ENCODE measurements at regions of chr21 and their contacts with region 1.

Region 1: GRCh38 chr21:42258153-42258884 is 39.4 kb downstream of the ABCG1 start:
- DNase-seq: peak; percentile 87
- ATAC-seq: peak; percentile 92
- H3K4me3 Mint-ChIP-seq: no peak overlapping the region
- H3K27ac Mint-ChIP-seq: no peak overlapping the region
- H3K4me1 Mint-ChIP-seq: peaks cover 18% of the 10 kb centered on the region
- H3K27me3 Mint-ChIP-seq: no peaks in the 10 kb centered on the region

Region 2: DNA sequence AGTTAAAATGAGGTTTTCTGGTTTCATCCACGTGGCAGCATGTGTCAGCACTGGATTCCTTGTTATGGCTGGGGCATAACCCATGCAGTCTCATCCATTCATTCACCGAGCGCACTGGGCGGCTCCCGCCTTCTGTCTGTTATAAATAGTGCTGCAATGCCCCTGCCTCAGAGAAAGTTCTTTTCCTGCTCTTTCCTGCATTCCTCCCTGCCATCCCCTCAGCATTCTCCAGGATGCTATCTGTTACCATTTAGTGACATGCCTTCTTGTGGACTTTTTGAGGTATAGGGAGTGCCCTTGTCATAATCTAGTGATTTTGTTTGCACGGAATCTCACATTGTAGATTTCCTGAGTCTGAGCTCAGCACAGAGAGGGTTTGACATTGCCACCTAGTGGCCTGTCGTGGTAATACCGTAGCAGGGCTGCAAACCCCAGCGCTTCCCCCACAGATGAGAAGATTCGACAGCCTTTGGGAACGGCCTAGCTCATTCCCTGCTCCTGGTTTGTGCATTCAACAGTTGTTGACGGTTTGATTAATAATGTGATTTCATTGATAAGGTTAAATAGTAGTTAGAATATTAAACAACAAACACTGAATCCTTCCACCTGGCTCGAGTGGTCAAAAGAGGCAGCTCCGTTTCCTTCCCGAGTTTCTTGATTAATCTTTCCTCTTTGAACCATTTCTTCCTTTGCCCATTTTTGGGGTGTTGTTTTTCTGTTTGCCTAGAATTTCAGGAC is 140.9 kb before region 1 on chr21:
- CTCF ChIA-PET with region 1: interaction called, 10 read pairs
- POLR2A ChIA-PET with region 1: no interaction called
- DNase-seq: peak; percentile 84
- ATAC-seq: peak; percentile 81
- H3K4me3 Mint-ChIP-seq: peak overlapping the region; percentile 38
- H3K27ac Mint-ChIP-seq: no peak overlapping the region
- H3K4me1 Mint-ChIP-seq: peaks cover 41% of the 10 kb centered on the region
- H3K27me3 Mint-ChIP-seq: peaks cover 49% of the 10 kb centered on the region

Region 3: GRCh38 chr21:42187976-42188653 is 70.2 kb before region 1 on chr21:
- CTCF ChIA-PET with region 1: interaction called, 29 read pairs
- POLR2A ChIA-PET with region 1: interaction called, 3 read pairs
- DNase-seq: peak; percentile 93
- ATAC-seq: peak; percentile 95
- H3K4me3 Mint-ChIP-seq: peak overlapping the region; percentile 53
- H3K27ac Mint-ChIP-seq: peak overlapping the region; percentile 94
- H3K4me1 Mint-ChIP-seq: peaks cover 76% of the 10 kb centered on the region
- H3K27me3 Mint-ChIP-seq: peaks cover 6% of the 10 kb centered on the region

Region 4: GRCh38 chr21:42220138-42220701 is 38.1 kb before region 1 on chr21:
- CTCF ChIA-PET with region 1: interaction called, 34 read pairs
- POLR2A ChIA-PET with region 1: no interaction called
- DNase-seq: peak; percentile 84
- ATAC-seq: peak; percentile 77
- H3K4me3 Mint-ChIP-seq: peak overlapping the region; percentile 82
- H3K27ac Mint-ChIP-seq: peak overlapping the region; percentile 78
- H3K4me1 Mint-ChIP-seq: peaks cover 16% of the 10 kb centered on the region
- H3K27me3 Mint-ChIP-seq: no peaks in the 10 kb centered on the region

Region 5: DNA sequence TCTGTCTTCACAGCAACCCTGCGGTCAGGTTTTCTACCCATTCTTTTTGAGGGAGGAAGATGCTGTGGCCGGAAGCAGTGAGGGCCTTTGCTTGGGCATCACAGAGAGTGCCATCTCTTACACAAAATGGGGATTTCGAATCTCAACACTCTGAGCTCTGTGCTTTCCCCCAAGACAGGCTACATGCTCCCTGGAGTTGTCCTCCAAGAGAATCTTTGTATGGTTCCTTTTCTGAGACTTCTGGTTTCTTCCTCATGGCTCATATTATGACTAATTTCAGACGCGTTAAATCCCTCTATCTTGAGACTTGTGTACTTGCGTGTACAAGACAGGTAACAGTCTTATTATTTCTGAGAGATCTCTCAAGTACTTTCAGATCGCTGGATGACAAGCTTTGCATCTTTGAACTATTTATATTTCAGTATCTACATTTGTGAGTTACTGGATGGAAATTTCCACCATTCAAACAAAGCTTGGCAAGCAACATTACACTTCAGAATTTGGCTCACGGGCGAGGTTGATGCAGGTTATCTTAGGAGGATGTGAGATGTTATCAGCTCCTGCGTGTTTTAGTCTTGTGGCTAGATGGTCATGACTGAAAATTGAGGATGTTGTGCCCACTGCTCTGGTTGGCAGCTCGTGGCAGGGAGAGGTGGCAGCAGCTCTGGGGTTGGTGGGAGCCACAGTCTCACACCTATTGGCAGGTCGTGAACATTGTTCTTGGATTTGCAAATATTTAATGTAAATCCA is 20.0 kb before region 1 on chr21:
- CTCF ChIA-PET with region 1: interaction called, 81 read pairs
- POLR2A ChIA-PET with region 1: interaction called, 3 read pairs
- DNase-seq: peak; percentile 68
- ATAC-seq: peak; percentile 41
- H3K4me3 Mint-ChIP-seq: peak overlapping the region; percentile 47
- H3K27ac Mint-ChIP-seq: peak overlapping the region; percentile 75
- H3K4me1 Mint-ChIP-seq: peaks cover 62% of the 10 kb centered on the region
- H3K27me3 Mint-ChIP-seq: no peaks in the 10 kb centered on the region

Measured in activated CD8-positive, alpha-beta T cell treated with anti-CD3 and anti-CD28 coated beads, Interleukin-2, amount 10 ng/mL, durations not matched to agents 7 days and 5 days (primary cell).